ENCODE measurements at regions of chr19 and their contacts with region 1.

Region 1: DNA sequence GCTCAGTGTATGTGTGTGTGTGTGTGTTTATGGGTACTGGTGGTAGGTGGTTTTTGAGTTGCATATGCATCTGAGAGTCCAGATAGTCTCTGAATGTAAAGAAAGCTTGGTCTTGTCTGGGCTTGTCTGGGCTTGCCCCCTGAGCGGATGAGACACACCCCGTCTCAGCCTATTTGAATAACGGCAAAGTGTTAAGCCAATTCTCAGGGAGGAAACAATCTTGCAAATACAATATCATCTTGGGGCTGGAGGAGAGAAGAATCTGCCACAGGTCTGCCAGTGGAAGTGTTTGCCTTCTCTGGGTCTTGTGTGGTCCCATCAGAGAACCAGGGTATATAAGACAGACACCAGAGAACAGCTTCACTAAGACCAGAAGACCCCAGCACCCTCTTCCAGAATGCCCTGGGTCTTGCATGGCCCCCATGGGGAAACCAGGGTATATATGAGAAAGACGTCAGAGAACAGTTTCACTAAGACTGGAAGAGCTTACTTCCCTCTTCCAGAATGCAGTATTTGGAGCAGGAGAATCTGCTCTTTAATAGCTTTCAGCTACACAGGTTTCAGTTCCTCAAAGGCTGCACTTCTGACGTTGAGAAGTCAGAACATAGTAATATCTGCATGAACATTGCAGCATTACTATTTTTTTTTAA is 13.3 kb downstream of the CD70 start:
- DNase-seq: peak; percentile 96
- ATAC-seq: peak; percentile 89
- H3K4me3 ChIP-seq: peak overlapping the region; percentile 26; the same call in 1 of the 2 replicates
- H3K27ac ChIP-seq: peak overlapping the region; percentile 99
- H3K4me1 ChIP-seq: peaks cover 50% of the 10 kb centered on the region
- H3K27me3 ChIP-seq: no peaks in the 10 kb centered on the region
- CTCF ChIP-seq: no peak
- EP300 ChIP-seq: peak; percentile 81 to 98
- POLR2A ChIP-seq: peak; percentile 69
- RAD21 ChIP-seq: no peak

Region 2: GRCh38 chr19:6530386-6531161 is 47.0 kb before region 1 on chr19 and contains the start of gene TNFSF9:
- CTCF ChIA-PET with region 1: interaction called, 4 read pairs
- POLR2A ChIA-PET with region 1: interaction called, 14 read pairs
- RAD21 ChIA-PET with region 1: interaction called, 9 read pairs
- SMC1A ChIA-PET with region 1: interaction called, 4 read pairs
- in situ Hi-C with region 1: no loop called
- intact Hi-C with region 1: no loop called
- DNase-seq: no peak
- ATAC-seq: peak; percentile 55
- H3K4me3 ChIP-seq: peak within 1 kb of the TSS; percentile 99
- H3K27ac ChIP-seq: peak within 1 kb of the TSS; percentile 83
- H3K4me1 ChIP-seq: peaks cover 34% of the 10 kb centered on the region
- H3K27me3 ChIP-seq: no peaks in the 10 kb centered on the region
- CTCF ChIP-seq: no peak
- EP300 ChIP-seq: no peak
- POLR2A ChIP-seq: peak; percentile 98
- RAD21 ChIP-seq: no peak
- polyA plus RNA-seq, gene TNFSF9: 6.2 to 12.8 TPM

Measured in GM12878 (cell line).